Aorta (tissue), 5 donors: ENCODE measurements at regions of chr4 and their contacts with region 1.

Region 1: DNA sequence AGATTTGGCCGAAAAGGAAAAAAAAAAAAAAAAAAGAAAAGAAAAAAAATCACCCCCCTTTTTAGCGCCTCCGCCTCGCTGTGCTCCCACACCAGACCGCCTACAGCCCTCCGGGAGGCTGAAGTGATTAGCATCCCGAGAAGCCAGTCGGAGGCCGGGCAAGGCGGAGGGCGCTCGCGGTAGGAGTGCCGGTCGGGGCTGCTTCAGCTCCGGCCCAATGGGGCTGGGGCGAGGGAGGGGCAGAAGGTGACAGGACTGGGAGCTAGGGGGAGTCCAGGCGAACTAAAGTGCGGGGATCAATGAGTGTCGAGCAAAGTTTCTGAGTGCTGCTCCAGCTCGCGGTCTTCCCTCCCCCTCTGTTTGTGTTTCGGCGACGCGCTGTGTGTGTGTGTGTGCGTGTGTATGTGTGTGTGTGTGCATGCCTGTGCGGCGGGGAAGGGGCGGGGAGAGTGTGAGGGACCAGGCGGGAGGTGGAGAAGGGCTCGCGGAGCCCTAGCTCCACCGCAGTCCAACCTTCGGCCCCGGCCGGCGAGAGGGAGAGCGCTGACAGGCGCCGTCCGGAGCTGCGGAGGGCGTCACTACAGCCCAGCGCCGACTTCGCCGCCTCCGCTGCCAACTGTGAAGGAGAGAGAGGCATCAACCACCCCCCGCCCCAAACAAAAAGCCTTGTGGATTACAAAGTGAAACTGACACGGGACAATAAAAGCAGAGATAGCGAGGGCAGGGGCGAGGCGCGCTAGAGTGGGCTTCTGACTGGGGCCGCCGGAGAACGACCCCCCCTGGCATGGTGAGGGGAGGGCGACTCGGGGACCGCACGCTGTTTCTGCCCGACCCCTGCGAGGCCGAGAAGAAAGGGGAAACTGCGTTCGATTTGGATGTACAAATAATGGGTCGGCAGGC is at the start of gene FAT4:
- DNase-seq: peak; percentile 96 to 99
- ATAC-seq: peak; percentile 94
- H3K4me3 ChIP-seq: peak within 1 kb of the TSS; percentile 50 to 72
- H3K27ac ChIP-seq: peak within 1 kb of the TSS; percentile 17 to 77
- H3K4me1 ChIP-seq: peaks cover 6 to 8% of the 10 kb centered on the region in 2 donors
- H3K27me3 ChIP-seq: no peaks in the 10 kb centered on the region
- total RNA-seq, gene FAT4: 40.5 to 48.0 TPM

Region 2: DNA sequence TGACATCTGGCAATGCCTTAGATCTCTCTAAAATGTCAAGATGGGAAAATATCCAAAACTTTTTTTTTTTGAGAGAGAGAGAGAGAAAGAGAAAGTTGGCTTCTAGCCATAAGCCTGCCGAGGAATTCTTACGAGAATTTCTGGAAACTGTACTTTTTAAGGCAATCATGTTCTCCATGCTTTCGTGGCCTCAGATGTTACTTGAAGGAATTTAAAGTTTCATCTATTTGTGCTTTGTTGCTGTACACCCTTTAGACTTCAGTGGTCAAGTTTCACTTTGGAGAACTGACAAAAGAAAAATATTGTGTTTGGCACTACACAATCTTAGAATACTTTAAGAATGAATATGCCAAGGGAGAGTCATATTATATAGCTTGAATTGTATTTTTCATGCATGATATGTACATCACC is 53.8 kb after region 1 on chr4:
- intact Hi-C with region 1: loop called in 1 of 2 experiments (anchors 5 kb)
- DNase-seq: no peak
- ATAC-seq: peak; percentile 40
- H3K4me3 ChIP-seq: peak overlapping the region; percentile 26 to 69
- H3K27ac ChIP-seq: no peak overlapping the region
- H3K4me1 ChIP-seq: peaks cover 0 to 1% of the 10 kb centered on the region in 2 donors
- H3K27me3 ChIP-seq: no peaks in the 10 kb centered on the region

Region 3: GRCh38 chr4:125389713-125390112 is 74.8 kb after region 1 on chr4:
- intact Hi-C with region 1: loop called (anchors 5 kb)
- DNase-seq: no peak
- ATAC-seq: peak; percentile 80
- H3K4me3 ChIP-seq: peak overlapping the region in 1 of 2 donors; percentile 26
- H3K27ac ChIP-seq: peak overlapping the region in 1 of 2 donors; percentile 33
- H3K4me1 ChIP-seq: peaks cover 0 to 2% of the 10 kb centered on the region in 2 donors
- H3K27me3 ChIP-seq: no peaks in the 10 kb centered on the region

Region 4: GRCh38 chr4:125483278-125483677 is 168.4 kb after region 1 on chr4:
- intact Hi-C with region 1: loop called in 1 of 2 experiments (anchors 10 kb)
- DNase-seq: no peak
- ATAC-seq: no peak
- H3K4me3 ChIP-seq: no peak overlapping the region
- H3K27ac ChIP-seq: no peak overlapping the region
- H3K4me1 ChIP-seq: no peaks in the 10 kb centered on the region
- H3K27me3 ChIP-seq: no peaks in the 10 kb centered on the region

Region 5: GRCh38 chr4:125520258-125520990 is 205.5 kb after region 1 on chr4:
- intact Hi-C with region 1: loop called in 1 of 2 experiments (anchors 5 kb)
- DNase-seq: no peak
- ATAC-seq: no peak
- H3K4me3 ChIP-seq: no peak overlapping the region
- H3K27ac ChIP-seq: no peak overlapping the region
- H3K4me1 ChIP-seq: no peaks in the 10 kb centered on the region
- H3K27me3 ChIP-seq: no peaks in the 10 kb centered on the region

Region 6: DNA sequence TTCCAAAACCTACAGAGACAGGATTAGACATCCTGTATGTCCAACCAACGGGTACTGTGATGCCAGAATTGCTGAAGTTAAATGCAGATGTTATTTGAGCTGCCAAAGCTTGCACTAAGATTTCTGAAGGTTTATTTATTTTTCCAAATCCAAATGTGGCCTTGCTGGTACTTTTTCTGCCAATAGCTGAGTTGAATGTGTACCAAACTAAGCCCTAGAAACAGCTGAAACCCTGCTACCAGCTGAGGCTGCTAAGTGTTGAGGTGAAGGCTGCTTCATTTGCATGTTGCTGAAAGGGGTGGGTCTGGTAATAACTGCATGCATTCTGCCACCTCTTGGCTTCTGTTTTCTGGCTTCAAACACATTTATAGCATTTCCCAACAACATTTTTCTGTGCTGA is 366.3 kb after region 1 on chr4:
- intact Hi-C with region 1: no loop called
- DNase-seq: no peak
- ATAC-seq: no peak
- H3K4me3 ChIP-seq: peak overlapping the region; percentile 12 to 16
- H3K27ac ChIP-seq: no peak overlapping the region
- H3K4me1 ChIP-seq: peaks cover 0 to 4% of the 10 kb centered on the region in 2 donors
- H3K27me3 ChIP-seq: no peaks in the 10 kb centered on the region

Region 7: DNA sequence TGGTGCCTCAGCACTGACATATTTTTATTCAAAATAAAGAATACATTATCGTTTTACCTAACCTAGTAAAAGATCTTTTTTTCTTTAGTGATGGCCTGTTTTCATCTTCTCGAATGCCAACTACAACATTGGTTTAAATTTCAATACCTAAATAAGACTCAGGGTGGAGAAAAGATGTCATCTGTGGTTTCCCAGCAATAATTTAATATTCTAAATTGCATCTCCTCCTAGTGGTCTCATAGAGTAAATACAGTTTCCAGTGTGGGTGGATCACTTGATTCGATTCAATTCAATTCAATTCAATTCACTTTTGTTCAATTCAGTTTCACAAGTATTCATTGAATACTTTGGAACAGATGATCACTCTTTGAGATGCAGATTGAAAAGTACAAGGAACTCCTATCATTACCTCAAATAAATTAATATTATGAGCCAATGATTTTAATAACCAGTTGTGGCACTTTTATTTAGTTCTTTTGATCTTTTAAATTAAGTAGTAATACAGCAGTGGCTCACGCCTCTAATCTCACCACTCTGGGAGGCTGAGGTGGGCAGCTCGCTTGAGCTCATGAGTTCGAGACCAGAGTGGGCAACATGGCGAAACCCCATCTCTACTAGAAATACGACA is 427.0 kb after region 1 on chr4:
- intact Hi-C with region 1: loop called (anchors 2 kb)
- DNase-seq: no peak
- ATAC-seq: no peak
- H3K4me3 ChIP-seq: no peak overlapping the region
- H3K27ac ChIP-seq: no peak overlapping the region
- H3K4me1 ChIP-seq: no peaks in the 10 kb centered on the region
- H3K27me3 ChIP-seq: no peaks in the 10 kb centered on the region

Region 8: GRCh38 chr4:126604268-126604867 is 1289.4 kb after region 1 on chr4:
- intact Hi-C with region 1: loop called (anchors 5 to 10 kb)
- DNase-seq: no peak
- ATAC-seq: peak; percentile 62
- H3K4me3 ChIP-seq: no peak overlapping the region
- H3K27ac ChIP-seq: no peak overlapping the region
- H3K4me1 ChIP-seq: no peaks in the 10 kb centered on the region
- H3K27me3 ChIP-seq: no peaks in the 10 kb centered on the region